Naive thymus-derived CD4-positive, alpha-beta T cell (primary cell): ENCODE measurements at regions of chr4 and their contacts with region 1.

Region 1: DNA sequence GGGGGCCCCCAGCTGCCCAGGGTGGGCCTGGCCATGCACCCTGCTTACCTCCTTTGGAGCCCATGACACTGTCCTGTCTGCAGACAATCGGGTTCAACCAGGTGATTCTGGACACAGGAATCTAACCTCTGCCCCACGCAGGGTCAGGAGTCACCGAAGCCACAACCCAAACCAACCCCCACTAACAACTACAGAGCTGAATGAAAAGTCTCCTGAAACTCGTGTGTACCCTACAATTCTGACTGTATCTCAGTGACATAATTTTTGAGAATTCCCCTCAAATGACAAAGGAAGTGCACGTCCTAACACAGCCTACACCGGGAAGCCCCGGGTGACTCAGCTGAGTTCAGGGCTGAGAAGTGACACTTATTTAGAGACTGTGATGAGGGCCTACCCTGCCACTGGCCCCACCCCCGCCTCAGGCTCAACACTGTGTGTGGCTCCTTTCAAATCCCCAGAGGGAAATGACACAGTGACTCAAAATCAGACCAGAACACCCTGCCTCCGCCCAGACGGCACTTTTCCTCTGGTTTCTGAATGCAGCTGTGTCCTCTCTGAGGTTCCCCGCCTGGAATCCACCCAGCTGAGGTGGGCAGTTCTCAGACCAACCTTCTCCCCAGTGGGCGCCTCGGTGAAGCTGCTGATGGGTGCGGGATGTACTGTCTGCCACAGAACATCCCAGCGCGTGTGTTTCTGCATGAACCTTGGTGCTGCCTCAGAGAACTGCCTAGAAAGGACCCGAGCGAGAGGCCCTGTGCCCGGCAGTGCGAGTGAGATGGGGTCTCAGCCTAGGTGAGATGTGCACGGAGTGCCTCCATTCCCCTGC is 9.9 kb downstream of the TNIP2 start:
- DNase-seq: peak in 2 of 9 donors; percentile 66 to 89
- ATAC-seq: peak; percentile 96
- H3K4me3 ChIP-seq: peak overlapping the region; percentile 20
- H3K4me3 Mint-ChIP-seq: peak overlapping the region in 1 of 10 donors; percentile 77
- H3K27ac ChIP-seq: peak overlapping the region; percentile 53
- H3K27ac Mint-ChIP-seq: peak overlapping the region; percentile 30 to 93 (median 70)
- H3K4me1 ChIP-seq: peaks cover 0 to 24% of the 10 kb centered on the region in 2 donors
- H3K4me1 Mint-ChIP-seq: peaks cover 5 to 52% (median 13%) of the 10 kb centered on the region in 7 donors
- H3K27me3 ChIP-seq: no peaks in the 10 kb centered on the region
- H3K27me3 Mint-ChIP-seq: no peaks in the 10 kb centered on the region

Region 2: DNA sequence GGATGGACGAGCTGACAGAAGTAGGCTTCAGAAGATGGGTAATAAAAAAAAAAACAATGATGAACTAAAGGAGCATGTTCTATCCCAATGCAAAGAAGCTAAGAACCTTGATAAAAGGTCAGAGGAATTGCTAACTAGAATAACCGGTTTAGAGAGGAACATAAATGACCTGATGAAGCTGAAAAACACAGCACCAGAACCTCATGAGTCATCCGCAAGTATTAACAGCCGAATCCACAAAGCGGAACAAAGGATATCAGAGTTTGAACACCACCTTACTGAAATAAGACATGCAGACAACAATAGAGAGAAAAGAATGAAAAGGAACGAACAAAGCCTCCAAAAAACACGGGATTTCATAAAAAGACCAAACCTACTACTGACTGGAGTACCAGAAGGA is 747.9 kb before region 1 on chr4:
- CTCF ChIA-PET with region 1: no interaction called
- POLR2A ChIA-PET with region 1: no interaction called
- intact Hi-C with region 1: no loop called
- DNase-seq: no peak
- ATAC-seq: no peak
- H3K4me3 ChIP-seq: no peak overlapping the region
- H3K4me3 Mint-ChIP-seq: peak overlapping the region in 2 of 10 donors; percentile 3 to 39
- H3K27ac ChIP-seq: no peak overlapping the region
- H3K27ac Mint-ChIP-seq: peak overlapping the region in 2 of 9 donors; percentile 4 to 12
- H3K4me1 ChIP-seq: peaks cover 0 to 5% of the 10 kb centered on the region in 2 donors
- H3K4me1 Mint-ChIP-seq: peaks cover 16 to 74% (median 64%) of the 10 kb centered on the region in 7 donors
- H3K27me3 ChIP-seq: no peaks in the 10 kb centered on the region
- H3K27me3 Mint-ChIP-seq: no peaks in the 10 kb centered on the region

Region 3: DNA sequence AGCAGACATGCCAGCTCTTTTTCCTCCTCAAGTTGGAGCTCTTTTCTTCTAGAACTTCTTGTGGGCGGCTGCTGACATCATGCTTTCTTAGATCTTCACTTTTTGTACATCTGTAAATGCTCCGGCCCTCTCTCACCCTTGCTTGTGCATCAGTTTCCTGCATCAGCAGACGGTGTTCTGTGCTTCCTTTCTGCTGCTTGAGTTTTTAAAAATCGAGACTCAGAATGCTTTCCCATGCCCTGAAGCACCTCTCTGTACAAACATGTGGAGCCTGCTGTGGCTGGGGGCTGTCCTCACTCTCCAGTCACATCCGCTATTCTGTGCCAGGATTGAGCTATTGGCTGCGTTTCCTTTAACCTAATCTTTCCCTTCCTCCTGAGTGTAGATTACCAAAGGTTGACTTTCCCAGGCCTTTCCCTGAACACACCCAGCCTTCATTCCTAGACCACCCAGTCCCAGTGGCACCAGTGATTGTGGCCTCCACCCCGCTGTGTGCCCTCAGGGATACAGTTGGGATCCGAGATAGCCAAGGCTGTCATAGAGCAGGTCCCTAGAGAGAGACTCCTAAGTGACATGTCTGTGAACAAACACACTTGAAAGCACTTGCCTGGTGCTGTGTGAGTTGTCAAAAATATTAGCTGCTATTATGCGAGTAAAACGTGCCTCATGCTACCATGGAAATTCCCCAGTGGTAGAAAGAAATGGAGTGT is 32.0 kb before region 1 on chr4:
- CTCF ChIA-PET with region 1: no interaction called
- POLR2A ChIA-PET with region 1: no interaction called
- intact Hi-C with region 1: loop called in 1 of 2 experiments (anchors 1 kb)
- DNase-seq: peak in 7 of 9 donors; percentile 49 to 74 (median 66)
- ATAC-seq: peak; percentile 85
- H3K4me3 ChIP-seq: no peak overlapping the region
- H3K4me3 Mint-ChIP-seq: peak overlapping the region in 9 of 10 donors; percentile 0 to 66 (median 40)
- H3K27ac ChIP-seq: peak overlapping the region; percentile 60
- H3K27ac Mint-ChIP-seq: peak overlapping the region; percentile 77 to 95 (median 88)
- H3K4me1 ChIP-seq: peaks cover 6 to 16% of the 10 kb centered on the region in 2 donors
- H3K4me1 Mint-ChIP-seq: peaks cover 14 to 29% (median 23%) of the 10 kb centered on the region in 7 donors
- H3K27me3 ChIP-seq: no peaks in the 10 kb centered on the region
- H3K27me3 Mint-ChIP-seq: no peaks in the 10 kb centered on the region

Region 4: GRCh38 chr4:2787230-2788088 is 41.3 kb after region 1 on chr4:
- CTCF ChIA-PET with region 1: no interaction called
- POLR2A ChIA-PET with region 1: no interaction called
- intact Hi-C with region 1: loop called in 1 of 2 experiments (anchors 2 kb)
- DNase-seq: peak in 7 of 9 donors; percentile 30 to 68 (median 56)
- ATAC-seq: peak; percentile 65
- H3K4me3 ChIP-seq: no peak overlapping the region
- H3K4me3 Mint-ChIP-seq: peak overlapping the region; percentile 47 to 77 (median 56)
- H3K27ac ChIP-seq: peak overlapping the region; percentile 80
- H3K27ac Mint-ChIP-seq: peak overlapping the region; percentile 86 to 95 (median 90)
- H3K4me1 ChIP-seq: peaks cover 25 to 30% of the 10 kb centered on the region in 2 donors
- H3K4me1 Mint-ChIP-seq: peaks cover 21 to 54% (median 37%) of the 10 kb centered on the region in 7 donors
- H3K27me3 ChIP-seq: no peaks in the 10 kb centered on the region
- H3K27me3 Mint-ChIP-seq: peaks cover 0 to 13% (median 0%) of the 10 kb centered on the region in 5 donors

Region 5: GRCh38 chr4:3047464-3048286 is 301.5 kb after region 1 on chr4:
- CTCF ChIA-PET with region 1: no interaction called
- POLR2A ChIA-PET with region 1: no interaction called
- intact Hi-C with region 1: loop called in 1 of 2 experiments (anchors 2 kb)
- DNase-seq: peak; percentile 40 to 75 (median 58)
- ATAC-seq: peak; percentile 79
- H3K4me3 ChIP-seq: peak overlapping the region; percentile 65
- H3K4me3 Mint-ChIP-seq: peak overlapping the region; percentile 62 to 92 (median 83)
- H3K27ac ChIP-seq: peak overlapping the region; percentile 61
- H3K27ac Mint-ChIP-seq: peak overlapping the region; percentile 79 to 90 (median 84)
- H3K4me1 ChIP-seq: peaks cover 16 to 18% of the 10 kb centered on the region in 2 donors
- H3K4me1 Mint-ChIP-seq: peaks cover 17 to 45% (median 35%) of the 10 kb centered on the region in 7 donors
- H3K27me3 ChIP-seq: no peaks in the 10 kb centered on the region
- H3K27me3 Mint-ChIP-seq: peaks cover 0 to 17% (median 0%) of the 10 kb centered on the region in 5 donors